Sigmoid colon (tissue), 7 donors: ENCODE measurements at regions of chr19 and their contacts with region 1.

Region 1: GRCh38 chr19:19320362-19321142 is at the starts of genes MAU2 and SUGP1:
- DNase-seq: peak; percentile 92
- H3K4me3 ChIP-seq: peak within 1 kb of the TSS; percentile 86 to 100 (median 100)
- H3K27ac ChIP-seq: peak within 1 kb of the TSS; percentile 86 to 94 (median 92)
- H3K4me1 ChIP-seq: peaks cover 0 to 51% (median 34%) of the 10 kb centered on the region in 4 donors
- H3K27me3 ChIP-seq: no peaks in the 10 kb centered on the region
- CTCF ChIP-seq: peak in 3 of 4 experiments; percentile 27 to 43 (median 42)
- EP300 ChIP-seq: no peak
- POLR2A ChIP-seq: no peak
- total RNA-seq, gene MAU2: 31.0 to 94.4 (median 44.3) TPM
- total RNA-seq, gene SUGP1: 28.8 to 51.0 (median 36.8) TPM

Region 2: GRCh38 chr19:19354932-19355331 is 34.4 kb after region 1 on chr19:
- intact Hi-C with region 1: loop called (anchors 5 kb)
- DNase-seq: no peak
- H3K4me3 ChIP-seq: no peak overlapping the region
- H3K27ac ChIP-seq: no peak overlapping the region
- H3K4me1 ChIP-seq: no peaks in the 10 kb centered on the region
- H3K27me3 ChIP-seq: no peaks in the 10 kb centered on the region
- CTCF ChIP-seq: no peak
- EP300 ChIP-seq: no peak
- POLR2A ChIP-seq: no peak